ENCODE measurements at regions of chr18 and their contacts with region 1.

Region 1: DNA sequence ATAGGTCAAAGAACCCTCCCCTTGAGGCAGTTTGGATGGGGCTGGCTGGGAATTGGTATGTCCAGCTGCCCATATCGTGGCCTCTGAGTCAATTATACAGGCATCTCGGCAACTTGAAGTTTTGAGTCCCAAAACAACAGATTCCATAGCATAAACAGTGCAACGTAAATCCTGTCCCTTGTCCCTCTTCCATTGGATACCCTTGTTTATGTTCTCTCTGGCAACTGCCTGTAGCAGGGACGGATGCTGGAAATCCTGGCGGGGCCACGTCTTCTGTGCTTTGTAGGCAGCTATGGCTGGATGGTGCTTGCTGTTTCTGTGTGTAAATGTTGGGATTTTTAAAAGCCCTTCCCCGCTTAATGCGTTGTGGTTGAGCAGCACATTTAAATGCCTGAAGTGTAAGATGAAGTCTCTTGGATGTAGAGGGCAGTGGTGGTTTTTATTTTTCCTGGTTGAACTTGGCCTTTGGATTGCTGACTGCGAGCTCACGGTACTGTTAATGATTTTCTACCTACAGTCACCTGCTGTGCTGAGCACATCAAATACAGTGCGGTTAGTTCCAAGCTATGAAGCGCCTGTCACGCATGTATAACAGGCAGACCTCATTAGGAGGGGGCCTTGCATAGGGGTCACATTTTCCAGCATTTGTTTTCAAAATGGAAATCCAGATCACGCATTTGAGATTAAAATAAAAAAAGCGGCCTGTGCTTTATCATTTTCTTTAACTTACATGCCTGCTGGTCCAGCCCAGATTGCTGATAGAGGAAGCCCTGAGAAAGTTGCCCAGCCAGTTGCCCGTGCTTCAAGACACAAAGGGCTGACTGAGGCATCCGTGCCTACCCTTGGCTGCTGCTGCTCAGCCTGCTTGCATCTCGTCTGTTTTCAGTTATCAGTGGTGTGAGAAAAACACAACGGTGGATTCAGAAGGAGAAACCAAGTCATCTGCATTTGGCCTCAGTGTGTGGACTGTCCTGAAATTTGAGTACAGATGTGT is 84.7 kb downstream of the NEDD4L start:
- DNase-seq: no peak
- CTCF ChIP-seq: no peak

Region 2: DNA sequence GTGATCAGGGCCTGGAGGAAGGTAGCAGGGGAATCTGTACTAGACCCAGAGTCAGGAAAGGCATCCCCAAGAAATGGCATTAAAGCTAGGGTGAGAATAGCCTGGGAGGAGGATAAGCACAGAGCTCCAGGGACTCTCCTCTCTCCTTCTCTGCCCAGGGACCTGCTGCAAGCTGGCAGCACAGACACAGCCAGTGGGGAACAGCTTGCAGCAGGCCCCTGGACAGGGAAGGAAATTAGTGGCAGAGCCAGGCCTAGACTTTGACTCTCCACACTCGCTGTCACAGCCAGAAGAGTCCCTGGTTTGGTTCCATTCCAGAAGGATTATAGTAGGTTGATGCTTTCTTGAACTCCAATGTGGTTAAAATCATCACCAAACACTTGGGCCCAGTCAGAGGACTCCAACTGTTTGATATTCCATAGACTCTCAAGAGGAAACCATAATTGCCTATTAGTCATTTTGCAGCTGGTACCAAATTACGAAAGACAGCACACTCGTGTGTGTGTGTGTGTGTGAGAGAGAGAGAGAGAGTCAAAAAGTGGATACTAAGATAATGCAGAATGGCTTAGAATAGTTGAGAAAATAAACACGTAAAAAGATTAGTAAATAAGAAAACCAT is 230.1 kb before region 1 on chr18:
- in situ Hi-C with region 1: loop called (anchors 10 kb)
- DNase-seq: no peak
- CTCF ChIP-seq: no peak

Region 3: DNA sequence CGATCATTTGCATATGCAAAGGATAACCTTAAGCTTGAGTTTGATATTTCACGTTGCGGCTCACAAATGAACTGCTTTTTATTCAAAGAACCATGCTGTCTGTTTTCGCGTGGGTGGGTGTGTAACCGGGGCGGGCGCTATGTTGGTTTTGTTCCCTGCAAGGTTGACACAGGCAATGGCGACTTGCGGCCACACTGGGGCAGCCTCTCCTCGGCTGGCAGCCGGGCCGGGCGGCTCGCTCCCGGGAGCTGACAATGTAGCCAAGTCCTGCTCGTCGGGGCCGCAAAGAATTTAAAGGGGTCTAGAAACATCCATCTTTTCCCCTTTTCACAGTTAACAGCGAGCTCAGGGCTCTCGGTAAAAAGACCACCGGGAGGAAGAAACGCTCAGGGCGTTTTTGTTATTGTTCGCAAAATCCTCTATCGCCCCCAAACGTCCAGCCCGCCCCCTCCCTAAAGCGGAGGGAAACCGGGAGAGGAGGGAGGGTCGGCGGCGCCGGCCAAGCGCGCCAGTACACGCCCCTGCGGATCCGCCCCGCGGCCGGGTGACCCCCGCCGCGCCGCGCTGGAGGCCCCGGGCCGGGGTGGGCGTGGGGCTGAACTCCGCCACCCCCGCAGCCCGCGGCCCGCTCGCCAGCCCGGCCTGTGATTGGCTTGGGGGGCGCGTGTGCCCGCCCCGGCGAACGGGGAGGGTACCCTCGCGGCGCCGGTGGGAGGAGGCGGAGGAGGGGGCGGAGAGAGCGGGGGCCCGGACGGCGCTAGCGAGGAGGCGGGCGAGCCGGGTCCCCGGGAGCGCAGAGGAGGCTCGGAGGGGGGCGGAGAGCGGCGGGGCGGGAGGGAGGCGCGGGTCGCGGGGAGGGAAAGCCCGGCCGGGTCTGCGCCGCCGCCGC is 84.9 kb before region 1 on chr18 and contains the start of gene NEDD4L:
- in situ Hi-C with region 1: loop called (anchors 10 kb)
- DNase-seq: peak; percentile 89
- CTCF ChIP-seq: peak; percentile 78